ENCODE measurements at regions of chr20 and their contacts with region 1.

Region 1: GRCh38 chr20:37265152-37265551 is 3.5 kb upstream of the GHRH start:
- DNase-seq: peak in 1 of 5 donors; percentile 3
- H3K4me3 ChIP-seq: no peak overlapping the region
- H3K27ac ChIP-seq: no peak overlapping the region
- H3K4me1 ChIP-seq: no peaks in the 10 kb centered on the region
- H3K27me3 ChIP-seq: no peaks in the 10 kb centered on the region
- CTCF ChIP-seq: no peak

Region 2: GRCh38 chr20:37475252-37475651 is 210.1 kb after region 1 on chr20:
- intact Hi-C with region 1: no loop called
- DNase-seq: peak in 4 of 5 donors; percentile 46 to 86 (median 72)
- H3K4me3 ChIP-seq: no peak overlapping the region
- H3K27ac ChIP-seq: no peak overlapping the region
- H3K4me1 ChIP-seq: peaks cover 0 to 2% (median 0%) of the 10 kb centered on the region in 3 donors
- H3K27me3 ChIP-seq: no peaks in the 10 kb centered on the region
- CTCF ChIP-seq: no peak

Region 3: DNA sequence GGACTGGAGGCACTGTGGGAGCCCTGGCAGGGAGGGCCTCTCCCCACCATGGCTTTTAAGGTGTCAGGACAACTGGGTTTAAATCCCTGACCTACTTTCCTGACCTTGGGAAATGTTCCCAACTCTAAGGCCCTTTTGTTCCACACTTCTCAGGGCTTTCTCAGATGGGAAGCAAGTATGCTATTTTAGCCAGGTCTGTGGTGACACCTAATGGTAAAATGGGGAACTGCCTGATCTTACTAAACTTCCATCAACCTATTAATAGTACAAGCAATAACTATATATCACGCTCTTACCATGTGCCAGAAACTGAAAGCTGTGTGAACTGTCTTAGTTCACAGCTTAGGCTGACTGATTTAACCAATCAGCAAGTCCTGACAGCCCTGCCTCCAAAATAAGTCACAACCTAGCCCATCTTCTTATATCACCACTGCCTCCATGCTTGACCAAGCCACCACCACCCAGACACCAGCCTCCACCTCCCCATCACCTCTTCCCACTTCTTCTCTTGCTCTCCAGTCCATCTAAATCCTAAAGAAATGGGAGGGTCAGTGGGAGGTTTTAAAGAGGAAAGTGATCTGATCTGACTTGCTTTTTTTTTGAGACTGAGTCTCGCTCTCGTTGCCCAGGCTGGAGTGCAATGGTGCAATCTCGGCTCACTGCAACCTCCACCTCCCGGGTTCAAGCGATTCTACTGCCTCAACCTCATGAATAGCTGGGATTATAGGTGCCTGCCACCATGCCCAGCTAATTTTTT is 269.4 kb after region 1 on chr20:
- intact Hi-C with region 1: loop called (anchors 5 kb)
- DNase-seq: peak in 4 of 5 donors; percentile 68 to 92 (median 80)
- H3K4me3 ChIP-seq: no peak overlapping the region
- H3K27ac ChIP-seq: no peak overlapping the region
- H3K4me1 ChIP-seq: no peaks in the 10 kb centered on the region
- H3K27me3 ChIP-seq: no peaks in the 10 kb centered on the region
- CTCF ChIP-seq: peak; percentile 92